Uterus (tissue), 4 donors: ENCODE measurements at regions of chr10 and their contacts with region 1.

Region 1: DNA sequence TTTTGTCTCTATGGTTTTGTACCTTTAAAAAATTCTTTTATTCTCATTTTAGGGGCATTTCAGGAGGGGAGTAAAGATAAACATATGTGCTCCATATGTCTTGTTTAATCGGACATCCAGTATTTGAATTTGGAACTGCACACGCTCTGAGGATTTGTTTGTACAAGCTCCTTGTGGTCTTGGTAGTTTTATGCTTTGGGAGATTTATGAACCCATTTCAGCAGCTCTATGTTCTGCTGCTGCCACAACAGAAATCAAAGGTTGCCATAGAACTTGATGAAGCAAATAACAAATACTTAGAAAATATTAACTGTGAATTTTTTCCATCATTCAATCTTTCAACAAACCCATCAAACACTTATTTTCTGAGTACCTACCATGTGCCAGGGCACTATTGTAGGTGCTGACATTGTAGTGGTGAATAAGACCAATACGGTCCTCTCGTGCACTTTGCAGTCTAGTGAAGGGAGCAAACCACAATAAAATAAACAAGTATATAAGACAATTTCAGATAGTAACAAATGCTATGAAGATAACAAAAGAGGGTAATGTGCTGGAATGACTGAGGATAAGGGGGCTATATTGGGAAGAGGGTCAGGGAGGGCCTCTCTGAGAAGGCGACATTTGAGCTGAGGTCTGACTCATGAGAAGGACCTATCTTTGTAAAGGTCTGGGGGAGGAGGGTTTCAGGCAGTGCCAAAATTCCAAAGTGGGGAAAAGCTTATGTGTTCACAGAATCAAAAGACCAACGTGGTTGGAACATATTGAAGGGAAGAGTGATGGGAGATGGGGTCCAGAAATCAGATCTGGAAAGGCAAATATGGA is 30.4 kb downstream of the MYPN start:
- DNase-seq: no peak
- H3K4me3 ChIP-seq: no peak overlapping the region
- H3K27ac ChIP-seq: no peak overlapping the region
- H3K4me1 ChIP-seq: no peaks in the 10 kb centered on the region
- H3K27me3 ChIP-seq: no peaks in the 10 kb centered on the region
- CTCF ChIP-seq: no peak
- POLR2A ChIP-seq: no peak

Region 2: GRCh38 chr10:67849331-67850011 is 290.2 kb before region 1 on chr10:
- intact Hi-C with region 1: loop called (anchors 10 kb)
- DNase-seq: peak; percentile 97
- H3K4me3 ChIP-seq: peak overlapping the region; percentile 76 to 83
- H3K27ac ChIP-seq: peak overlapping the region; percentile 94 to 97
- H3K4me1 ChIP-seq: no peaks in the 10 kb centered on the region
- H3K27me3 ChIP-seq: no peaks in the 10 kb centered on the region
- CTCF ChIP-seq: peak in 1 of 4 experiments; percentile 19
- POLR2A ChIP-seq: peak; percentile 37 to 69

Region 3: DNA sequence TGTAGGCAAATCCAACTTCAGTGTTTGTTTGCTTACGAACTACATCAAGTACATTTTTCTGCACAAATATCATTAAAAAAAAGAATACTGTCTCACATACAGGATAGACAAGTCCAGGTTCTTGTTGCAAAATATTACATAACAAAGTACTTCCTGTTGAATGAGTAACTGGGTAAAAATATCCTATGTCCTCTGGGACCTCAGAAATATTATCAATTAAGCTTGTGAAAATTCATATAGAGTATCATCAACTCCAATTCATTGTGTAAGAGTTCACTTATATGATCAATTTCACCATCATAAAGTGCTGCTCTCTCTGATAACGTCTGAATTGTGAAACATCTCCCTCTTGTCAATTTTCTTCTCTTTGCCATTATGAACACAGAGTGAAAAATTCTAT is 87.2 kb before region 1 on chr10:
- intact Hi-C with region 1: no loop called
- DNase-seq: no peak
- H3K4me3 ChIP-seq: no peak overlapping the region
- H3K27ac ChIP-seq: no peak overlapping the region
- H3K4me1 ChIP-seq: no peaks in the 10 kb centered on the region
- H3K27me3 ChIP-seq: no peaks in the 10 kb centered on the region
- CTCF ChIP-seq: no peak
- POLR2A ChIP-seq: no peak